GM12878 (cell line): ENCODE measurements at regions of chr7 and their contacts with region 1.

Region 1: GRCh38 chr7:37683246-37684120 is at the start of gene GPR141:
- DNase-seq: peak; percentile 93
- ATAC-seq: peak; percentile 97
- H3K4me3 ChIP-seq: 0 out of 2 replicates have a peak within 1 kb of the TSS, but pooled peaks have one; percentile 44
- H3K27ac ChIP-seq: peak within 1 kb of the TSS; percentile 48
- H3K4me1 ChIP-seq: peaks cover 25% of the 10 kb centered on the region
- H3K27me3 ChIP-seq: no peaks in the 10 kb centered on the region
- CTCF ChIP-seq: no peak
- EP300 ChIP-seq: peak; percentile 62 to 74; a peak in 3 of 4 replicates
- POLR2A ChIP-seq: no peak
- RAD21 ChIP-seq: peak; percentile 7; the same call in 1 of the 2 replicates
- polyA plus RNA-seq, gene GPR141: 0.97 to 1.2 TPM

Region 2: GRCh38 chr7:37052705-37053104 is 630.8 kb before region 1 on chr7:
- CTCF ChIA-PET with region 1: no interaction called
- POLR2A ChIA-PET with region 1: no interaction called
- RAD21 ChIA-PET with region 1: no interaction called
- SMC1A ChIA-PET with region 1: no interaction called
- in situ Hi-C with region 1: no loop called
- intact Hi-C with region 1: no loop called
- DNase-seq: no peak
- ATAC-seq: no peak
- H3K4me3 ChIP-seq: no peak overlapping the region
- H3K27ac ChIP-seq: no peak overlapping the region
- H3K4me1 ChIP-seq: no peaks in the 10 kb centered on the region
- H3K27me3 ChIP-seq: no peaks in the 10 kb centered on the region
- CTCF ChIP-seq: no peak
- EP300 ChIP-seq: no peak
- POLR2A ChIP-seq: no peak
- RAD21 ChIP-seq: no peak

Region 3: DNA sequence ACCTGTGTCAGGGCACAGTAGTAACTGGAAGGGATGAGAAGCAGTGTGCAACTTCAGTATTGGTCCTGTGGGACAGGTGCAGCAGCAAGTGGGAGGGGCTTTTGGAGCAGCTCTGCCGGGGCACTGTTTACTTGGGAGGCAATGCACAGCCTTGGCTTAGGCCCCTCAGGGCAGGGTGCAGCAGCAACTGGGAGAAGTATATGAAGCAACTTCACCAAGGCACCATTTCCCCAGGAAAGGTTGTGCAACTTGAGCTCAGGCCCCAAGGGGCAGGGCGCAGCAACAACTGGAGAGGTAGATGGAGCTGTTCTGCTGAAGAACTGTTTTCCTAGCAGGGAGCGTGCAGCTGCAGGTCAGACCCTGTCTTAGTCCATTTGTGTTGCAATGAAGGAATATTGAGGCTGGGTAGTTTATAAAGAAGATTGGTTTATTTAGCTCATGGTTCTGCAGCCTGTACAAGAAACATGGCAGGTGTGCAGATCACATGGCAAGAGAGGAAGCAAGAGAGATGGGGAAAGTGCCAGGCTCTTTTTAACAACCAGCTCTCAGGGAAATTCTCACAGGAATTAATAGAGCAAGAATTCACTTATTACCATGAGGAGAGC is 10.8 kb after region 1 on chr7:
- CTCF ChIA-PET with region 1: interaction called, 5 read pairs
- POLR2A ChIA-PET with region 1: interaction called, 12 read pairs
- RAD21 ChIA-PET with region 1: interaction called, 18 read pairs
- SMC1A ChIA-PET with region 1: interaction called, 24 read pairs
- in situ Hi-C with region 1: no loop called
- intact Hi-C with region 1: no loop called
- DNase-seq: no peak
- ATAC-seq: no peak
- H3K4me3 ChIP-seq: no peak overlapping the region
- H3K27ac ChIP-seq: no peak overlapping the region; the same call in 1 of the 2 replicates
- H3K4me1 ChIP-seq: peaks cover 7% of the 10 kb centered on the region
- H3K27me3 ChIP-seq: no peaks in the 10 kb centered on the region
- CTCF ChIP-seq: no peak
- EP300 ChIP-seq: no peak
- POLR2A ChIP-seq: no peak
- RAD21 ChIP-seq: no peak

Region 4: GRCh38 chr7:37701769-37702168 is 18.3 kb after region 1 on chr7:
- CTCF ChIA-PET with region 1: interaction called, 8 read pairs
- POLR2A ChIA-PET with region 1: interaction called, 8 read pairs
- RAD21 ChIA-PET with region 1: interaction called, 5 read pairs
- SMC1A ChIA-PET with region 1: interaction called, 26 read pairs
- in situ Hi-C with region 1: no loop called
- intact Hi-C with region 1: no loop called
- DNase-seq: no peak
- ATAC-seq: no peak
- H3K4me3 ChIP-seq: no peak overlapping the region
- H3K27ac ChIP-seq: no peak overlapping the region
- H3K4me1 ChIP-seq: peaks cover 4% of the 10 kb centered on the region; the same call in 1 of the 2 replicates
- H3K27me3 ChIP-seq: no peaks in the 10 kb centered on the region
- CTCF ChIP-seq: no peak
- EP300 ChIP-seq: no peak
- POLR2A ChIP-seq: no peak
- RAD21 ChIP-seq: no peak

Region 5: DNA sequence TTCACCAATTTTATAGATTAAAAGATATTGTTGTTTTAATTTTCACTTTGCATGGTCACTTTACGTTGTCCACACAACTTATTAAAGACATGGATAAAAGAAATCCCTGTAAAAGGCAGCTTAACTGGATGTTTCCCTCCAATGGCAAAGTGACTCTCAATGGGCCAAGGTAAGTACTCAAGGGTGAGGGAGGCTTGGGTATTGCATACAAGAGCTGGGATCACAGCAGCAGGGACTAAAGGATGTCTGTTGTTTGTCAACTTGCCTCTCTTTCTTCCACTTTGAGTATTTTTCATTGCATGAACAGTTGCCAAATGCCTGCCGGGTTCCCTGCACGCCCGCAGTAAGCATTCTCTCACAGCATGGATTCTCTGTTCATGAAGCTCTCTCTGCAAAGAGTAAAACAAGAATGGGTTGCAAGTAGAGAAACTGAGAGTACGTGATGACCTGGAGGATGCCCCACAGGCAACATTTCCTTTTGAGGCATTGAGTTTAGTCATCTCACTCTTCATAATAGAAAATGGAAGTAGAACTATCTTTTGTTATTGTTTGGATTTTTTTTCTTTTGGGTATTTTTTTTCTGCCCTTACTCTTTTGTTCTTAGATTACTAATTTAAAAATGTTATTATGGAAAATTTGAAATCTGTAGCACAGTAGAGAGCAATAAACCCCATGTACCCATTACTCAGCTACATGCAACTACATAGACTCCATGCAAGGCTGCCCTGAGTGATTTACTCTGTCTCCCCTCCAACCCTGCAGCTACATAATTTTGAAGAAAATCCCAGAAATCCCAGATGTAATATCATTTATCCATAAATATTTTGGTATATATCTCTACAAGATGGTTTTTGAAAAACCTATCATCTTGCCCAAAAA is 26.4 kb after region 1 on chr7:
- CTCF ChIA-PET with region 1: interaction called, 8 read pairs
- POLR2A ChIA-PET with region 1: interaction called, 8 read pairs
- RAD21 ChIA-PET with region 1: interaction called, 12 read pairs
- SMC1A ChIA-PET with region 1: interaction called, 26 read pairs
- in situ Hi-C with region 1: no loop called
- intact Hi-C with region 1: no loop called
- DNase-seq: peak; percentile 75
- ATAC-seq: peak; percentile 99
- H3K4me3 ChIP-seq: peak overlapping the region; percentile 25; the same call in 1 of the 2 replicates
- H3K27ac ChIP-seq: peak overlapping the region; percentile 40; the same call in 1 of the 2 replicates
- H3K4me1 ChIP-seq: peaks cover 13% of the 10 kb centered on the region
- H3K27me3 ChIP-seq: no peaks in the 10 kb centered on the region
- CTCF ChIP-seq: no peak
- EP300 ChIP-seq: peak in 1 of 2 experiments; percentile 20; a peak in 1 of 4 replicates
- POLR2A ChIP-seq: no peak
- RAD21 ChIP-seq: no peak

Region 6: GRCh38 chr7:37724732-37725131 is 41.2 kb after region 1 on chr7:
- CTCF ChIA-PET with region 1: interaction called, 7 read pairs
- POLR2A ChIA-PET with region 1: interaction called, 4 read pairs
- RAD21 ChIA-PET with region 1: interaction called, 10 read pairs
- SMC1A ChIA-PET with region 1: interaction called, 19 read pairs
- in situ Hi-C with region 1: no loop called
- intact Hi-C with region 1: loop called (anchors 5 kb)
- DNase-seq: no peak
- ATAC-seq: no peak
- H3K4me3 ChIP-seq: no peak overlapping the region
- H3K27ac ChIP-seq: no peak overlapping the region
- H3K4me1 ChIP-seq: peaks cover 7% of the 10 kb centered on the region
- H3K27me3 ChIP-seq: no peaks in the 10 kb centered on the region
- CTCF ChIP-seq: no peak
- EP300 ChIP-seq: no peak
- POLR2A ChIP-seq: no peak
- RAD21 ChIP-seq: no peak

Region 7: DNA sequence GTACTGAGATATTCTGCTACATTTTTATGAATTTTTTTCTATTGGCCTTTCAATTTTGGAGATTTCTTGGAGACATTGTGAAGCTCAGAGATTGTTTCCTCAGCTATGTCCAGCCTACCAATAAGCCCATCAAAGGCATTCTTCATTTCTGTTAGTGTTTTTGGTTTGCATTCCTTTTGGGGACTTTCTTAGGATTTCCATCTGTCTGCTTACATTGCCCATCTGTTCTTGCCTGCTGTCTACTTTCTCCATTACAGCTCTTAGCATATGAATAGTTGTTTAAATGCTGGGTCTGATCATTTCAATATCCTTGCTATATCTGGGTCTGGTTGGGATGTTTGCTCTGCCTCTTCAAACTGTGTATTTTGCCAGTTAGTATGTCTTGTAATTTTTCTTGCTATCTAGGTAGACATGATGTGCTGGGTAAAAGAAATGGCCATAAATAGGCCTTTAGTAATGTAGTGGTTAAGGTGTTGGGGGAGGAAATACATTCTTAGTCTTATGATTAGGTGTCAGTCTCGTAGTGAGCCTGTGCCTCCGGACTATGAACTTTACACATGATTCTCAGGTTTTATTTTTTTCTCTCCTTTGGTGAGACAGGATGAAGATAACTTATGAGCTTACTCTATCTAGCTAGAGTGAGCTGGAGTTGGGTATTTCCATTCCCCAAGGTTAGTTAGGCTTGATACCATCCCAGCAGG is 132.3 kb after region 1 on chr7:
- CTCF ChIA-PET with region 1: interaction called, 3 read pairs
- POLR2A ChIA-PET with region 1: no interaction called
- RAD21 ChIA-PET with region 1: interaction called, 8 read pairs
- SMC1A ChIA-PET with region 1: interaction called, 14 read pairs
- in situ Hi-C with region 1: no loop called
- intact Hi-C with region 1: no loop called
- DNase-seq: peak; percentile 78
- ATAC-seq: peak; percentile 89
- H3K4me3 ChIP-seq: peak overlapping the region; percentile 6; the same call in 1 of the 2 replicates
- H3K27ac ChIP-seq: peak overlapping the region; percentile 90
- H3K4me1 ChIP-seq: peaks cover 43% of the 10 kb centered on the region
- H3K27me3 ChIP-seq: no peaks in the 10 kb centered on the region
- CTCF ChIP-seq: no peak
- EP300 ChIP-seq: peak; percentile 94 to 95
- POLR2A ChIP-seq: no peak
- RAD21 ChIP-seq: 0 out of 2 replicates have a peak, but pooled peaks have one; percentile 6